Heart left ventricle (tissue), 16 donors: ENCODE measurements at regions of chr2 and their contacts with region 1.

Region 1: DNA sequence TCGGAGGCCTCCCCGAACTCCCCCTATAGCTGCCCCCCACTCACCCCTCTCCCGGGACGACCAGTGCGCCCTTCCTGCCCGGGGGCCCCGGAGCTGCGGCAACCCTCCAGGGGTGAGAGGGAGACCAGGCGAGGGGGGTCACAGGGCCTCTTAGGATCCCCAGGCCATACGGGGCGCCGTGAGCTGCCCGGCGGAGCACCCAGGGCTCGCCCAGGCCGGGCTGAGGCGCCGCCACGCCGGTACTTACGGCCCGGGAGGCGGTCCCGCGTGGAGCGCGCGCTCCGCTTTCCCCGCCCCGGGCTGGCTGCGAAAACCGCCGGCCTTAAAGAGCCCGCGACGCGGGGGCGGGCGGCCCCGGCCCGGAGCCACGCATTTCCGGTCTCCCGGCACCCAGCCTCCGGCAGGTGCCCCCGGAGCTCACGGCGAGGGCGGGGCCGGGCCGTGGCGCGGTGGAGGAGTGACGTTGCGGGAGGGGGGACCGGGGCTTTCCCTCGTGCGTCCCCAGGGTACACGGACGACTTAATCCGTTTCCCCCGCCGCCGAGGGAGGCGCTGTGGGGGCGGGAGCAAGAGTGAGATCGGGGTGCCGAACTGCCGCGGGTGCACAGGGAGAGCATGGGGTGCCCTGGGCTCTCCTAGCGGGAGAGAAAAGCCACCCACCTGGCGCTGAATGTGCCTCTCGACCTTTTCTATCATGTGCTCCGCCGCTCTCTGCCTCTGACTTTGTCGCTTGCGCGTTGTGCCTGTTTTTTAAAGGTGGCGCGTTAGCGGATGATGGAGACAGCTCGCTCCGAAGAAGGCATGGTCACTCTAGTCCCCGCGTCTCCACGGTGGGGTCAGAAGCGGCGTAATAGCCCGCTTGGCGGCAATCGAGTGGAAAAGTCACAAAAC is at the start of gene METTL21A:
- DNase-seq: peak; percentile 89 to 95 (median 92)
- ATAC-seq: peak; percentile 82 to 96 (median 90)
- H3K4me3 ChIP-seq: peak within 1 kb of the TSS; percentile 60 to 98 (median 92)
- H3K27ac ChIP-seq: peak within 1 kb of the TSS; percentile 87 to 99 (median 94)
- H3K4me1 ChIP-seq: peaks cover 0 to 41% (median 15%) of the 10 kb centered on the region in 12 donors
- H3K27me3 ChIP-seq: no peaks in the 10 kb centered on the region
- CTCF ChIP-seq: peak in 11 of 12 donors; percentile 6 to 61 (median 36)
- POLR2A ChIP-seq: peak; percentile 25 to 86
- total RNA-seq, gene METTL21A: 10.2 to 27.6 (median 14.6) TPM

Region 2: DNA sequence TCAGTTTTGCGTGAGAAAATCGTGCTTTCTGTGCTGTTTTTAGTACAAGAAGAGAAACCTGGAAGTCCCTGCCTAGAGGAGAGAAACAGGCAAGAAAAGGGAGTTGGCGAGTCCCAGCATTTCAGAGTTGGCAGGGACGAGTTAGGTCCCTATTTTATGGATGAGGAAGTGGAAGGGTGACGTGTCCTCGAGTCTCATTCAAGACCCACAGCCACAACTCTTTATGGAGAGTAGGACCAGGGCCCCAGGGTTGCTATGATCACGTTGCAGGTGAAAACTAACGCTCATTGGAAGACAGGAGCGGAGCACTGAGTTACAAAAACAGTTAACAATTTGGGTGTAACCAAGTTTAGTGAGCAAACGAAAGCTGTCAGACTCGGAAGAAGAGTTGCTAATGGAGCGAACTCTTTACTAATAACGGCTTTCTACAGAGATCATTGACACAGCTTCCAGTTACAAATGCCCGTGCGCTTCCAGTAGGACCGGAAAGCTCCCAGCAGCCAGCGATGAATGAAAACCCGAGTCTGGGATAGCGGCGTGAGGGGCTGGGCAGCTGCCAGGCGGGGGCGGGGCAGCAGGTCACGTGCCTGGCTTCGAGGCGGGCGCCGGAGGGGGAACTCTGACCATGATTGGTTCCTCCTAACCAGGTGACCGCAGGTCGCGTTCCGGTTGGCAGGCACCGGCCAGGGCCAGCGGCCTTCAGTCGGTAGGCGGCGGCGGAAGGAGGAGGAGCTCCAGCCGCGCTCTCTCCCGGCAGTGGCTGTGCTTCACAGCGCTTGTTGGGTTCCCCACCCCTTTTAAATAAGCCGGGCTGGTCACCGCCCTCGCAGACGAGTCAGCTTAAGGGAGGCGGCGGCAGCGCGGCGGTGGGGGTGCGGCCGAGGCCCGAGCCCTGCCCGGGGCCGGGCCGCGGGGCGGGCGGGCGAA is 85.8 kb after region 1 on chr2 and contains the start of gene CCNYL1:
- intact Hi-C with region 1: loop called (anchors 1 to 10 kb)
- DNase-seq: peak; percentile 99 to 100 (median 100)
- ATAC-seq: peak; percentile 99 to 100 (median 100)
- H3K4me3 ChIP-seq: peak within 1 kb of the TSS; percentile 72 to 97 (median 90)
- H3K27ac ChIP-seq: peak within 1 kb of the TSS; percentile 79 to 95 (median 90)
- H3K4me1 ChIP-seq: peaks cover 0 to 28% (median 13%) of the 10 kb centered on the region in 12 donors
- H3K27me3 ChIP-seq: no peaks in the 10 kb centered on the region
- CTCF ChIP-seq: peak in 9 of 12 donors; percentile 14 to 56 (median 31)
- POLR2A ChIP-seq: peak; percentile 59 to 95
- total RNA-seq, gene CCNYL1: 4.5 to 17.5 (median 10.9) TPM

Region 3: GRCh38 chr2:207734264-207734635 is 109.0 kb after region 1 on chr2:
- intact Hi-C with region 1: loop called in 4 of 10 experiments (anchors 5 to 10 kb)
- DNase-seq: no peak
- ATAC-seq: peak; percentile 59 to 81 (median 70)
- H3K4me3 ChIP-seq: no peak overlapping the region
- H3K27ac ChIP-seq: no peak overlapping the region
- H3K4me1 ChIP-seq: no peaks in the 10 kb centered on the region
- H3K27me3 ChIP-seq: no peaks in the 10 kb centered on the region
- CTCF ChIP-seq: peak; percentile 22 to 56 (median 38)
- POLR2A ChIP-seq: no peak

Region 4: GRCh38 chr2:207792244-207792785 is 167.1 kb after region 1 on chr2:
- intact Hi-C with region 1: no loop called
- DNase-seq: no peak
- ATAC-seq: peak in 3 of 4 donors; percentile 61 to 81 (median 68)
- H3K4me3 ChIP-seq: no peak overlapping the region
- H3K27ac ChIP-seq: peak overlapping the region in 4 of 12 donors; percentile 11 to 93 (median 50)
- H3K4me1 ChIP-seq: peaks cover 0 to 31% (median 6%) of the 10 kb centered on the region in 12 donors
- H3K27me3 ChIP-seq: no peaks in the 10 kb centered on the region
- CTCF ChIP-seq: no peak
- POLR2A ChIP-seq: no peak

Region 5: GRCh38 chr2:208025037-208025813 is 400.0 kb after region 1 on chr2 and contains the start of gene PLEKHM3:
- intact Hi-C with region 1: loop called in 3 of 10 experiments (anchors 5 to 10 kb)
- DNase-seq: peak; percentile 86 to 94 (median 88)
- ATAC-seq: peak; percentile 93 to 97 (median 97)
- H3K4me3 ChIP-seq: peak within 1 kb of the TSS; percentile 68 to 91 (median 81)
- H3K27ac ChIP-seq: peak within 1 kb of the TSS; percentile 55 to 89 (median 78)
- H3K4me1 ChIP-seq: peaks cover 0 to 29% (median 17%) of the 10 kb centered on the region in 12 donors
- H3K27me3 ChIP-seq: no peaks in the 10 kb centered on the region
- CTCF ChIP-seq: no peak
- POLR2A ChIP-seq: peak in 1 of 2 donors; percentile 63
- total RNA-seq, gene PLEKHM3: 10.3 to 28.3 (median 17.4) TPM

Region 6: DNA sequence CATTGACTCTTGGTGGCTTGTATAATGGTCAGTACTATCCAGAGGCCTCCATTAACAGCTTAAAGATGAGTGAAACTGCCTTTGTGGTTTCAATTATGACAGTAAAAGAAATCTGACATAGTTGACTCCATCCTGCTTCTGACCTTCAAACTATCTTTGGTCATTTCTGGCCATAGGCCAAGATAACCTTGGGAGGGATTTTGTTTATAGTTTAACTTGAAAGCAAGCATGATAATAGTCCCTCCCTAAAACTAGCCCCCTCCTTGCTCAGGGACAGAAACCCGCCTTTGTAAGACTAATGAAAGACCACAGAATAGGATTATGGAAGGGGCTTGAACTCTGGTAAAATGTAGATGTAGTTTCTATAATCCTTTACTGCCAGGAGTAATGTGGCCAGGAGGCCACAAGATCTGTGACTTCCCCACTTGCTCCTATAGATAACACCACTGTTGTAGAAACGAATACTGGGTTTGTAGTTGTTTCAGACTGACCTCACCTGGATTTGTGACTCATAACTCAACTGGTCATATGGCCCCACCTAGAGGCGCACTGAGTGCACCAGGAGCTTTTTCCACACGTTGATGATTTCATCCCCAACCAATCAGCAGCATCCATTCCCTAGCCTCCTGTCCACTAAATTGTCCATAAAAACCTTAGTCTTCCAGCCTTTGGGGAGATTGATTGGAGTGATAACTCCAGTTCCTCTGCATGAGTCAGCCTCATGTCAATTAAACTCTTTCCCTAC is 408.7 kb after region 1 on chr2:
- intact Hi-C with region 1: loop called in 3 of 10 experiments (anchors 5 to 10 kb)
- DNase-seq: no peak
- ATAC-seq: peak; percentile 32 to 75 (median 68)
- H3K4me3 ChIP-seq: no peak overlapping the region
- H3K27ac ChIP-seq: no peak overlapping the region
- H3K4me1 ChIP-seq: peaks cover 0 to 13% (median 0%) of the 10 kb centered on the region in 12 donors
- H3K27me3 ChIP-seq: no peaks in the 10 kb centered on the region
- CTCF ChIP-seq: peak; percentile 13 to 57 (median 40)
- POLR2A ChIP-seq: no peak

Region 7: GRCh38 chr2:208847651-208848050 is 1222.4 kb after region 1 on chr2:
- intact Hi-C with region 1: no loop called
- DNase-seq: no peak
- ATAC-seq: no peak
- H3K4me3 ChIP-seq: no peak overlapping the region
- H3K27ac ChIP-seq: no peak overlapping the region
- H3K4me1 ChIP-seq: no peaks in the 10 kb centered on the region
- H3K27me3 ChIP-seq: no peaks in the 10 kb centered on the region
- CTCF ChIP-seq: no peak
- POLR2A ChIP-seq: no peak